ENCODE measurements at regions of chr5 and their contacts with region 1.

Region 1: GRCh38 chr5:135332519-135333150 is 66.4 kb downstream of the MACROH2A1 start:
- DNase-seq: no peak
- H3K4me3 ChIP-seq: no peak overlapping the region
- H3K27me3 ChIP-seq: no peaks in the 10 kb centered on the region
- CTCF ChIP-seq: peak; percentile 63

Region 2: DNA sequence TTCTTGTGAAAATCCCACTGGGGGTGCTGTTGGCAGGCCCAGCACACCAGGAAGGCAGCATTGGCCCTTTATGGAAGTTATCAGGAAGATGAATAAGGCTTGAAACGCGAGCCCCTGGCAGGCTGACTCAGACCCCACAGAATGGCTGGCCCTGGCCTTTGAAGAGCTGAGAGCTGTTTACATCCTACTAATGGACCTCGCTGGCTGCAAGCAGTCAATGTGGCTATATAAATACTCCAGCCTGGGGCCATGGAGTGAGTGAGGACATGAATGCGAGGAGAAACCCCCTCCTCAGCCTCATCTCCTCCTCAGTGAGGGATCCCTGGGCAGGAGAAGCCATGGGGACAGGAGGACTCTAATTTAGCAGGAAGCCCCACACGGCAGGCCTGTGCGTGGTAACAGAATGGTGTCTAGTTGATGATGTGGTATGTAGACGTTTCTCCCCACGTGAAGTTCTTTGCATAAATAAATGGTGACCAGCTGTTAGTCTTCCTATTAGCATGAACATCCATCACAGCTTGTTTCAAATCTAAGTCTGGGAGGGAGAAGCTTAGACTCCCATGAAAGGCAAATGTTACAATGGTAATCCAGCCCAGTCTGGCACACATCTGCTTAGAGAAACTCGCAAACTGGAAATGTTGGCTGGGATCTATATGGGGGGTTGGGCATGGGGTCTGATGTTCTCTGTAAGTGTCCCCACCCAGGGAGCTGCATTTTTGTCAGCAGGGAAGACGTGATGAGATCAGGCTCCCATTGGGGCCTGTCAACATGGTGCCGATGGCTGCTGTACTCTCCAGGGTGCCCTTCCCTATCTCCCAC is 123.5 kb before region 1 on chr5:
- CTCF ChIA-PET with region 1: interaction called, 12 read pairs
- POLR2A ChIA-PET with region 1: no interaction called
- DNase-seq: peak; percentile 74
- H3K4me3 ChIP-seq: no peak overlapping the region
- H3K27me3 ChIP-seq: no peaks in the 10 kb centered on the region
- CTCF ChIP-seq: peak; percentile 51

Region 3: DNA sequence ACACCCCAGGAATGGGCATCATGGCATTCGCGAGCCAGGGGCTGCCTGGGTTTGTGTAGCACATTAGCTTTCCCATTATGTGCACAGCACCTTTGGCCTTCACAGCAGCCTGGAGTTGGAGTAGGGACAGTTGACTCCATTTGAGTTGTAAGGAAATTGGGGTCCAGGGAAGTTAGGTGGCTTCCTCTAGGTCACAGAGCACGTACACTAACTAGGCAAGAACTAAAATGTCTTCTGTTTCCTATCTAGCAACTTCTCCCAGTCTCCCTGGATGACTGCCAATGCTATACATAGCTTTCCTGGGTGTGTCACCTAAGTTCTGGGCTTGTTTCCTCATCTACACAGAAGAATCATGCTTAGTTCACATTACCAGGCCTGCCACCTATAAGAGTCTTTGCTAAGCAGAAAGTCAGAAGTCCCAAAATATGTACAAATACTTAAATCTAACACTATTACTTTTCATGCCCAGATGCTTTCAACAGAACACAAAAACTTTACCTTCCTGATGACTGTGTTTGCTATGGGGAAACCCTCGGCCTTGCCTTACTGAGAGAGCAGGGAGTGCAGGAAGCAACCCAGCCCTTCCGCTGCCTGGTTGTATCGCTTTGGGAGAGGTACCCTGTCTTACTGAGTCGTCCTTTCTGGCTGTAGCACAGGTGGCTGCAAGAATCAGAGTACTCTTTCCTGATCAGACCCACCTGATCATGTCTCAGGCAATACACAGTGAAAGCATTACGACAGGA is 54.4 kb after region 1 on chr5:
- CTCF ChIA-PET with region 1: no interaction called
- POLR2A ChIA-PET with region 1: no interaction called
- DNase-seq: peak; percentile 57
- H3K4me3 ChIP-seq: no peak overlapping the region
- H3K27me3 ChIP-seq: no peaks in the 10 kb centered on the region
- CTCF ChIP-seq: no peak

Measured in BJ (cell line).